GM12878 (cell line): ENCODE measurements at regions of chr12 and their contacts with region 1.

Region 1: GRCh38 chr12:15856097-15856982 is 25.8 kb upstream of the STRAP start:
- DNase-seq: peak; percentile 40
- ATAC-seq: peak; percentile 84
- H3K4me3 ChIP-seq: no peak overlapping the region
- H3K27ac ChIP-seq: no peak overlapping the region
- H3K4me1 ChIP-seq: no peaks in the 10 kb centered on the region
- H3K27me3 ChIP-seq: no peaks in the 10 kb centered on the region
- CTCF ChIP-seq: peak; percentile 59 to 82 (median 60); a peak in 4 of 6 replicates
- EP300 ChIP-seq: no peak
- POLR2A ChIP-seq: no peak
- RAD21 ChIP-seq: peak; percentile 98

Region 2: DNA sequence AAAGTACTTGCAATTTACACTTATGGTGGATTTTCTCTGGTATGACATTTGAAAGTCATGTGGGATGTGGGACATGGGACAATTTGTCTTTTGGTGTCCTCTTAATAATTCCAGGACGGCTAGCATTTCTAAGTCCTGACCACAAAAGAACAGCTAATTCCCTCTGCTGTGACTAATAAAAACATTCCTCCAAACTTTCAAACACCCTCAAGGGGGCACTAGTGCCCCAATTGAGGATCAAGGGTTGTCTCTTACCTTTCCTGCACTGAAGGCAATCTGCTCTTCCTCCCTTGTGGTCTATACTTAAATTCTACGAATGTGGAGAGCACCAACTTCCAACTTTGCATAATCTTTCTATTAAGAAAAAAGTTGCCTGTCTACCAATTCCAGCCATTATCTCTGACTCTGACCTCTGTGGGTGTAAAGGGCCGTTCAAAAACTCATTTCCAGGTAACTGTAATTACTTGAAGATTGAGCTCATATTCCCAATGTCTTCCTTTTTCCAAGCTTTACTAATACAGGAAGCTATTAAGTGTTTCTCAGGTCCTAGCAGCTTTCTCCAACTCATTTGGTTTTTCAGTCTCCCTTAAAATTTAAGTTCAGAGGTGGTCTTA is 323.9 kb before region 1 on chr12:
- CTCF ChIA-PET with region 1: interaction called, 84 read pairs
- POLR2A ChIA-PET with region 1: no interaction called
- RAD21 ChIA-PET with region 1: interaction called, 48 read pairs
- SMC1A ChIA-PET with region 1: interaction called, 45 read pairs
- in situ Hi-C with region 1: loop called (anchors 5 kb)
- intact Hi-C with region 1: loop called (anchors 1 kb)
- DNase-seq: peak; percentile 36
- ATAC-seq: peak; percentile 89
- H3K4me3 ChIP-seq: no peak overlapping the region
- H3K27ac ChIP-seq: no peak overlapping the region
- H3K4me1 ChIP-seq: no peaks in the 10 kb centered on the region; the same call in 1 of the 2 replicates
- H3K27me3 ChIP-seq: no peaks in the 10 kb centered on the region; a peak in 1 of 4 replicates
- CTCF ChIP-seq: peak; percentile 57 to 89 (median 62)
- EP300 ChIP-seq: no peak
- POLR2A ChIP-seq: no peak
- RAD21 ChIP-seq: peak; percentile 98

Region 3: GRCh38 chr12:15608941-15609340 is 247.4 kb before region 1 on chr12:
- CTCF ChIA-PET with region 1: interaction called, 4 read pairs
- POLR2A ChIA-PET with region 1: no interaction called
- RAD21 ChIA-PET with region 1: interaction called, 11 read pairs
- SMC1A ChIA-PET with region 1: interaction called, 5 read pairs
- in situ Hi-C with region 1: no loop called
- intact Hi-C with region 1: no loop called
- DNase-seq: no peak
- ATAC-seq: no peak
- H3K4me3 ChIP-seq: no peak overlapping the region
- H3K27ac ChIP-seq: no peak overlapping the region
- H3K4me1 ChIP-seq: no peaks in the 10 kb centered on the region
- H3K27me3 ChIP-seq: no peaks in the 10 kb centered on the region
- CTCF ChIP-seq: no peak
- EP300 ChIP-seq: no peak
- POLR2A ChIP-seq: no peak
- RAD21 ChIP-seq: no peak

Region 4: GRCh38 chr12:15778126-15778525 is 78.2 kb before region 1 on chr12:
- CTCF ChIA-PET with region 1: interaction called, 35 read pairs
- POLR2A ChIA-PET with region 1: interaction called, 9 read pairs
- RAD21 ChIA-PET with region 1: interaction called, 8 read pairs
- SMC1A ChIA-PET with region 1: interaction called, 13 read pairs
- in situ Hi-C with region 1: no loop called
- intact Hi-C with region 1: loop called (anchors 2 kb)
- DNase-seq: no peak
- ATAC-seq: peak; percentile 26
- H3K4me3 ChIP-seq: no peak overlapping the region
- H3K27ac ChIP-seq: no peak overlapping the region
- H3K4me1 ChIP-seq: no peaks in the 10 kb centered on the region
- H3K27me3 ChIP-seq: no peaks in the 10 kb centered on the region
- CTCF ChIP-seq: no peak
- EP300 ChIP-seq: no peak
- POLR2A ChIP-seq: no peak
- RAD21 ChIP-seq: no peak

Region 5: GRCh38 chr12:15830538-15830937 is 25.8 kb before region 1 on chr12:
- CTCF ChIA-PET with region 1: interaction called, 10 read pairs
- POLR2A ChIA-PET with region 1: no interaction called
- RAD21 ChIA-PET with region 1: interaction called, 3 read pairs
- SMC1A ChIA-PET with region 1: no interaction called
- in situ Hi-C with region 1: no loop called
- intact Hi-C with region 1: no loop called
- DNase-seq: no peak
- ATAC-seq: no peak
- H3K4me3 ChIP-seq: no peak overlapping the region
- H3K27ac ChIP-seq: no peak overlapping the region
- H3K4me1 ChIP-seq: no peaks in the 10 kb centered on the region
- H3K27me3 ChIP-seq: peaks cover 0 to 2% of the 10 kb centered on the region in 2 experiments; a peak in 1 of 4 replicates
- CTCF ChIP-seq: no peak
- EP300 ChIP-seq: no peak
- POLR2A ChIP-seq: no peak
- RAD21 ChIP-seq: no peak

Region 6: DNA sequence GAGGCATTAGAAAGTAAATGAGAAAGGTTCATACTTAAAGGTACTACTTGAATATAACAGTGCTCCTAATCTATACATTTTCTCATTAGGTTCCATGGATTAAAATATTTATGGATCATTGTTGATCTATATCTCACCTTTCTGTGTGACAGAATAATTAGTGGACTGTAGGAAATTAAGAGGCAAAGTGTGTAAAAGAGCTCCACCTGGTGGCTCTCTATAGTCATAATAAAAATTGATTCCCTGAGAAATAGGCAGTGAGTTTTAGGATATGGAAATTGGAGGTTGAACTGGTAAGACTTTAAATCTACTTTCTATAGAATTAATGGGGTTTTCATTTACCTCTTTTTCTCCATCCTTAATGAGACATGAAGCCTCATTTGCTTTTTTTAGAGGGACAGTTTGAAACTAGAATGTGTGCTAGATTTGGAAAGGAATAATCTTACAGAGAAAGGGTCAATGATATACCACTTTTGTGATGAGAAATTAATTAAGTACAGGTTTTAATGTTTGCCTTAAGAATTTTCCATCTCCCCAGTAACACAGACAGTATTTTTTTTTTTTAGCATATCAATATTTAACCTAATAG is 43.0 kb after region 1 on chr12:
- CTCF ChIA-PET with region 1: interaction called, 74 read pairs
- POLR2A ChIA-PET with region 1: no interaction called
- RAD21 ChIA-PET with region 1: interaction called, 42 read pairs
- SMC1A ChIA-PET with region 1: interaction called, 56 read pairs
- in situ Hi-C with region 1: no loop called
- intact Hi-C with region 1: no loop called
- DNase-seq: no peak
- ATAC-seq: peak; percentile 76
- H3K4me3 ChIP-seq: no peak overlapping the region
- H3K27ac ChIP-seq: no peak overlapping the region
- H3K4me1 ChIP-seq: no peaks in the 10 kb centered on the region
- H3K27me3 ChIP-seq: no peaks in the 10 kb centered on the region
- CTCF ChIP-seq: peak; percentile 43 to 64 (median 57)
- EP300 ChIP-seq: no peak
- POLR2A ChIP-seq: no peak
- RAD21 ChIP-seq: peak; percentile 66